HCT116 (cell line): ENCODE measurements at regions of chrX and their contacts with region 1.

Region 1: GRCh38 chrX:110159235-110159634 is 156.3 kb downstream of the TMEM164 start:
- DNase-seq: no peak
- ATAC-seq: no peak
- H3K4me3 ChIP-seq: no peak overlapping the region
- H3K27ac ChIP-seq: no peak overlapping the region
- H3K4me1 ChIP-seq: peaks cover 0 to 4% of the 10 kb centered on the region in 2 experiments; a peak in 1 of 4 replicates
- H3K27me3 ChIP-seq: no peaks in the 10 kb centered on the region
- CTCF ChIP-seq: no peak
- POLR2A ChIP-seq: no peak
- RAD21 ChIP-seq: no peak

Region 2: GRCh38 chrX:110407910-110408545 is 248.8 kb after region 1 on chrX:
- CTCF ChIA-PET with region 1: interaction called, 10 read pairs
- POLR2A ChIA-PET with region 1: no interaction called
- RAD21 ChIA-PET with region 1: interaction called in 1 of 2 experiments, 6 read pairs
- intact Hi-C with region 1: loop called (anchors 1 kb)
- DNase-seq: peak; percentile 39
- ATAC-seq: peak; percentile 76
- H3K4me3 ChIP-seq: no peak overlapping the region
- H3K27ac ChIP-seq: no peak overlapping the region
- H3K4me1 ChIP-seq: peaks cover 5 to 11% of the 10 kb centered on the region in 2 experiments; a peak in 3 of 4 replicates
- H3K27me3 ChIP-seq: no peaks in the 10 kb centered on the region
- CTCF ChIP-seq: peak; percentile 53 to 64 (median 60); a peak in 5 of 6 replicates
- POLR2A ChIP-seq: no peak
- RAD21 ChIP-seq: peak; percentile 79

Region 3: GRCh38 chrX:110418316-110419235 is 259.3 kb after region 1 on chrX:
- CTCF ChIA-PET with region 1: interaction called, 21 read pairs
- POLR2A ChIA-PET with region 1: no interaction called
- RAD21 ChIA-PET with region 1: no interaction called
- intact Hi-C with region 1: no loop called
- DNase-seq: no peak
- ATAC-seq: peak; percentile 84
- H3K4me3 ChIP-seq: no peak overlapping the region
- H3K27ac ChIP-seq: no peak overlapping the region
- H3K4me1 ChIP-seq: peaks cover 0 to 19% of the 10 kb centered on the region in 2 experiments; a peak in 2 of 4 replicates
- H3K27me3 ChIP-seq: no peaks in the 10 kb centered on the region
- CTCF ChIP-seq: peak; percentile 31 to 52 (median 50); a peak in 5 of 6 replicates
- POLR2A ChIP-seq: no peak
- RAD21 ChIP-seq: peak; percentile 49